Uterus (tissue), 4 donors: ENCODE measurements at regions of chr22 and their contacts with region 1.

Region 1: GRCh38 chr22:23849009-23850006 is 8.4 kb upstream of the SLC2A11 start:
- DNase-seq: peak; percentile 71 to 87
- H3K4me3 ChIP-seq: no peak overlapping the region
- H3K27ac ChIP-seq: no peak overlapping the region
- H3K4me1 ChIP-seq: no peaks in the 10 kb centered on the region
- H3K27me3 ChIP-seq: no peaks in the 10 kb centered on the region
- CTCF ChIP-seq: peak; percentile 97 to 98 (median 97)
- POLR2A ChIP-seq: peak in 1 of 2 donors; percentile 41

Region 2: GRCh38 chr22:23542933-23543332 is 306.4 kb before region 1 on chr22:
- intact Hi-C with region 1: loop called (anchors 10 kb)
- DNase-seq: no peak
- H3K4me3 ChIP-seq: no peak overlapping the region
- H3K27ac ChIP-seq: no peak overlapping the region
- H3K4me1 ChIP-seq: no peaks in the 10 kb centered on the region
- H3K27me3 ChIP-seq: no peaks in the 10 kb centered on the region
- CTCF ChIP-seq: no peak
- POLR2A ChIP-seq: no peak

Region 3: GRCh38 chr22:23767673-23768548 is 81.4 kb before region 1 on chr22 and contains the start of gene CHCHD10:
- intact Hi-C with region 1: loop called (anchors 5 kb)
- DNase-seq: peak; percentile 73 to 78
- H3K4me3 ChIP-seq: peak within 1 kb of the TSS; percentile 36 to 44
- H3K27ac ChIP-seq: peak within 1 kb of the TSS; percentile 43 to 57
- H3K4me1 ChIP-seq: peaks cover 0 to 3% of the 10 kb centered on the region in 2 donors
- H3K27me3 ChIP-seq: no peaks in the 10 kb centered on the region
- CTCF ChIP-seq: peak; percentile 74 to 88 (median 82)
- POLR2A ChIP-seq: peak in 1 of 2 donors; percentile 56
- total RNA-seq, gene CHCHD10: 0.88 to 21.0 TPM in 2 of 4 donors, not detected in the others